ENCODE measurements at regions of chr5 and their contacts with region 1.

Region 1: DNA sequence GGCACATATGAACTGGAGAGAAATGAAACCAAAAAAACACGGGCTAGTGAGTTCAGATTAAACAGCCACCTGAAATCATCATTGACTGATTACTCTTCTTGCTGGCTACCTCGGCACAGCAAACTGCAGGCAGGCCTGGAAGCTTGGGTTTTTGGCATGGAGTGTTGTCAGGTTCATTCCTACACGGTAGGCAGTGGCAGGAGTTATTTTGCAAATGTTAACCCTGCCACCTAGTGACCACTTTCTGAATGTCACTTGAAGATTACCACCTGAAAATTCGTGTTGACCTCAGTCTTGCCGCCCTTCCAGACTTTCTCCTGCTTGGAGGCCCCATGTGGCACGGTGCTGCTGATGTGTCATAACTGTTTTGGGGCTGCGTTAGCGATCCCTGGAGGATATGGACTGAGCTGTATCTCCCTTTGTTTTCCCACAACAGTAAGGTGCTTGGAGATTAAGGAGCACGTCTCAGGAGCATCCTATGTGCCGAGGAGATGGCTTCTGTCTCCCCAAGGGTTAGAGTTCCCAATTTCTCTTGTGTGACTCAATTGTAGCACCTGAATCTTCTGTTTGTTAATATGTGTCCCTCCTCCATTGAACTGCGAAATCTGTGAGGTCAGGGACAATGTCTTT is 12.7 kb upstream of the CD180 start:
- DNase-seq: peak; percentile 75
- H3K4me3 ChIP-seq: no peak overlapping the region
- H3K27ac ChIP-seq: peak overlapping the region in 4 of 8 donors; percentile 36 to 93 (median 88)
- H3K4me1 ChIP-seq: peaks cover 14 to 58% (median 52%) of the 10 kb centered on the region in 6 donors
- H3K27me3 ChIP-seq: no peaks in the 10 kb centered on the region
- CTCF ChIP-seq: peak; percentile 67 to 90 (median 82)
- POLR2A ChIP-seq: no peak

Region 2: DNA sequence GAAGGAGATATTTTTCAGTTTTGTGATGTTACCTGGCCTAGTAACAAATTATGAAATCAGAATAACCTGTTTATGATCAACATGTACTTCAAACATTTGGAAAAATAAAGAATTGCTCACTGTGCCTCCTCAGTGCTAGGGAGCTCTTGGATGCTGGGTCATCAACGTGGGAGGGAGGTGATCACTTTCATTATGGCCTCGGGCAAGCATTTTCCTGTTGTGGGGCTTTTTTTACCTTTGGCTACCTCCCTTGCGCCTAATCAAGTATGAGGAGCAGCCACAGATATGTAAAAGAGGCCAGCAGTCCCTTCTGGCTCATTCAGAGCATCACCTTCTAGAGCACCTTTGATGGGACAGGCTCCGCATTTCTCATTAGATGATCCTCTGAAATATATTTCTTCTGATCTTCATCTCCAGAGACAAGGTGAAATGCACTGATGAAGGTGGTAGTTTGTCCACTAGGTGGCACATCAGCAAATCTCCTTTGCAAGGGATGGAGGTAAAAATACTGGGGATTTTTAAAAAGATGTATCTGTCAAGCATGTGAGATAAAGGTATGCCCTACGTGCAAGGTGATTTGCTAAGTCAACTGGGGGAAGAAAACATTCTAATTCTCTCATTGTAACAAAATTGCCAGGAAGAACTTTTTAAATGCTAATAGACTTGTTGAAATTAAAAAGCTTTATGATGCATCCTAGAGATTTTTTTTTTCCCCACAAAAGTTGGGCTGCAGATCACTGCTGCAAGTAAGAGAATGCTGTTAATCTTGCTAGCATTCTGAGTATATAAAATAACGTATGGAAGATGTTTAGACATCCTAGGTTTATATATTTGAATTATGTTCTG is 394.9 kb before region 1 on chr5:
- intact Hi-C with region 1: loop called (anchors 5 kb)
- DNase-seq: no peak
- H3K4me3 ChIP-seq: no peak overlapping the region
- H3K27ac ChIP-seq: no peak overlapping the region
- H3K4me1 ChIP-seq: peaks cover 0 to 15% (median 2%) of the 10 kb centered on the region in 6 donors
- H3K27me3 ChIP-seq: peaks cover 0 to 12% (median 0%) of the 10 kb centered on the region in 7 donors
- CTCF ChIP-seq: peak; percentile 21 to 79 (median 65)
- POLR2A ChIP-seq: no peak

Region 3: DNA sequence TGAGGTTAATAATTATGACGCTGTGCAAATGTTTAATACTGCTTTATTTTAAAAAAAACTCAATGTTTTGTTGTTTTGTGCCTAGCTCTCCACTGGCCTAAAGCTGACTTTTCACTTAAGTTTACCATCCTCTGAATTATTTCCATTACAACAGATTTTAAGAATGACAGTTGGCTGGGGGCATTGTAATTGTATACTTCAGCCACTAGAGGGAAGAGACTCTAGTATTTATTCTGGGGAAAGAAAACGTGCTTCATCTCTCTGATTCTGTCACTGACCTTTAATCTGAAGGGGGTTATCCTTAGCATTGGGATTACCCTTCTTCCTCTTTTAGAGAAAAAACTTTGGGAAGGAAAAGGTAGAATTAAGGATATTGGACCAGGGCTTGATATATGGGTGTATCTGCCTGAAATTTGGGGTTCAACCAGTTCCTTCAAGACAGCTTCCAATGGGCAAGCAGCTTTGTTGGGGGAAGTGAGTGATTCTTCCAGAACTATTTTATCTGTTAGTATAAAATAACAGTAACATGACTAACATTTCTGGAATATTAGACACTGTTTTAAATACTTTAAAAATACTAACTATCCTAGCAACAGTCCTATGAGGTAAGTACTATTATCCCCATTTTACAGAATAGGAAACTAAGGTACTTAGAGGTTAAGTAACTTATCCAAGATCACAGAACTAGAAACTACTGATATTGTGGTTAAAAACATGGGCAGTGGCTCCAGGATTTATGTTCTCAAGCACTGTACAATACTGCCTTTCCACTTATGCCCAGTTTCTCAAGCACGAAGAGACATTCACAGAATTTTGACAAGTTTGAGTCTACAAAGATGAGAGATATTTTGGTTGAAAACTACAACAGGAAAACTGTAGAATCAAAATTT is 221.1 kb before region 1 on chr5:
- intact Hi-C with region 1: loop called (anchors 10 kb)
- DNase-seq: no peak
- H3K4me3 ChIP-seq: no peak overlapping the region
- H3K27ac ChIP-seq: no peak overlapping the region
- H3K4me1 ChIP-seq: peaks cover 0 to 5% (median 0%) of the 10 kb centered on the region in 6 donors
- H3K27me3 ChIP-seq: no peaks in the 10 kb centered on the region
- CTCF ChIP-seq: peak; percentile 53 to 87 (median 82)
- POLR2A ChIP-seq: no peak

Region 4: GRCh38 chr5:67165526-67166459 is 43.5 kb before region 1 on chr5:
- intact Hi-C with region 1: loop called (anchors 5 kb)
- DNase-seq: peak; percentile 95
- H3K4me3 ChIP-seq: peak overlapping the region in 7 of 8 donors; percentile 18 to 67 (median 34)
- H3K27ac ChIP-seq: peak overlapping the region; percentile 86 to 94 (median 90)
- H3K4me1 ChIP-seq: peaks cover 0 to 76% (median 23%) of the 10 kb centered on the region in 6 donors
- H3K27me3 ChIP-seq: no peaks in the 10 kb centered on the region
- CTCF ChIP-seq: peak; percentile 74 to 92 (median 84)
- POLR2A ChIP-seq: no peak

Measured in spleen (tissue), 13 donors.